HEK293 (cell line): ENCODE measurements at regions of chr17 and their contacts with region 1.

Region 1: DNA sequence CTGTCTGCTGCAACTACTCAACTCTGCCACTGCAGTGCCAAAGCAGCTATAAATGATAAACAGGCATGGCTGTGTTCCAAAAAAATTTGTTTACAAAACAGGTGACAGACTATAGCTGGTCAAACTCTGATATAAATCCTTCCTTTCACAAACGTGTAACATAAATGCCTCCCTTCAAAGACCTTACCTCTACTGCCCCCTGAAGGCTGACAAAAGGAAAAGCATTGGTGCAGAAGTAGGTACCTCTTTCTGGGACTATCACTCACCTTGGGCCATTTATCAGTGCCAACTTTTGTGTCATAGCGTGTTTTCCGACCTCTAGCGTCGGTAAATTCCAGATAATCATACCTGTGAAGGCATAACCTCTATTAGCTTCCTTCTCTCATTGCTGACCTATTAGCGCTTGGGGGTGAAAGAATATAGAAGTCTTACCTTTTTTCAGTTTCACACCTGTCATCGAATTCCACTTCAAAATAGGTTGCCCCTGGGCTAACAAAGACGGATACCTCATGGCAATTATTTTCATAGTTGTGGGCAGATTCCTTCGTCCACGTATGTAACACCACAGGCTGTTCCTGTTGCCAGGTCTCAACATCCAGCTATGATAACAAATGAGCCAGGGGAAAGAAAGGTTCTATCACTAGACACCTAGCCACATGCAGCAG is 67.9 kb downstream of the ZZEF1 start:
- H3K4me3 ChIP-seq: no peak overlapping the region
- H3K27ac ChIP-seq: no peak overlapping the region
- H3K4me1 ChIP-seq: no peaks in the 10 kb centered on the region
- CTCF ChIP-seq: 0 out of 2 replicates have a peak, but pooled peaks have one; percentile 38

Region 2: GRCh38 chr17:3935140-3935542 is 139.8 kb before region 1 on chr17:
- CTCF ChIA-PET with region 1: interaction called, 17 read pairs
- POLR2A ChIA-PET with region 1: no interaction called
- H3K4me3 ChIP-seq: no peak overlapping the region
- H3K27ac ChIP-seq: no peak overlapping the region
- H3K4me1 ChIP-seq: no peaks in the 10 kb centered on the region
- CTCF ChIP-seq: peak; percentile 83

Region 3: GRCh38 chr17:4090898-4091297 is 15.9 kb after region 1 on chr17:
- CTCF ChIA-PET with region 1: interaction called, 13 read pairs
- POLR2A ChIA-PET with region 1: no interaction called
- H3K4me3 ChIP-seq: no peak overlapping the region
- H3K27ac ChIP-seq: no peak overlapping the region
- H3K4me1 ChIP-seq: no peaks in the 10 kb centered on the region
- CTCF ChIP-seq: no peak

Region 4: GRCh38 chr17:4327638-4328037 is 252.7 kb after region 1 on chr17:
- CTCF ChIA-PET with region 1: no interaction called
- POLR2A ChIA-PET with region 1: no interaction called
- H3K4me3 ChIP-seq: no peak overlapping the region
- H3K27ac ChIP-seq: no peak overlapping the region
- H3K4me1 ChIP-seq: peaks cover 28% of the 10 kb centered on the region
- CTCF ChIP-seq: no peak